B cell (primary cell): ENCODE measurements at regions of chr9 and their contacts with region 1.

Region 1: GRCh38 chr9:99140685-99141314 is 35.9 kb downstream of the TGFBR1 start:
- DNase-seq: peak; percentile 75
- ATAC-seq: peak; percentile 88
- H3K4me3 ChIP-seq: no peak overlapping the region
- H3K4me3 Mint-ChIP-seq: no peak overlapping the region
- H3K27ac ChIP-seq: no peak overlapping the region
- H3K27ac Mint-ChIP-seq: peak overlapping the region; percentile 46
- H3K4me1 ChIP-seq: peaks cover 15 to 16% of the 10 kb centered on the region in 2 donors
- H3K4me1 Mint-ChIP-seq: peaks cover 27% of the 10 kb centered on the region
- H3K27me3 ChIP-seq: no peaks in the 10 kb centered on the region
- H3K27me3 Mint-ChIP-seq: no peaks in the 10 kb centered on the region
- CTCF ChIP-seq: peak; percentile 99

Region 2: GRCh38 chr9:98848450-98849149 is 292.2 kb before region 1 on chr9:
- CTCF ChIA-PET with region 1: interaction called, 77 read pairs
- POLR2A ChIA-PET with region 1: no interaction called
- intact Hi-C with region 1: no loop called
- DNase-seq: peak; percentile 74
- ATAC-seq: peak; percentile 91
- H3K4me3 ChIP-seq: no peak overlapping the region
- H3K4me3 Mint-ChIP-seq: no peak overlapping the region
- H3K27ac ChIP-seq: no peak overlapping the region
- H3K27ac Mint-ChIP-seq: no peak overlapping the region
- H3K4me1 ChIP-seq: no peaks in the 10 kb centered on the region
- H3K4me1 Mint-ChIP-seq: no peaks in the 10 kb centered on the region
- H3K27me3 ChIP-seq: no peaks in the 10 kb centered on the region
- H3K27me3 Mint-ChIP-seq: no peaks in the 10 kb centered on the region
- CTCF ChIP-seq: peak; percentile 97

Region 3: GRCh38 chr9:98989036-98990000 is 151.5 kb before region 1 on chr9:
- CTCF ChIA-PET with region 1: interaction called, 439 read pairs
- POLR2A ChIA-PET with region 1: no interaction called
- intact Hi-C with region 1: no loop called
- DNase-seq: no peak
- ATAC-seq: no peak
- H3K4me3 ChIP-seq: no peak overlapping the region
- H3K4me3 Mint-ChIP-seq: no peak overlapping the region
- H3K27ac ChIP-seq: no peak overlapping the region
- H3K27ac Mint-ChIP-seq: no peak overlapping the region
- H3K4me1 ChIP-seq: peaks cover 14 to 17% of the 10 kb centered on the region in 2 donors
- H3K4me1 Mint-ChIP-seq: peaks cover 17% of the 10 kb centered on the region
- H3K27me3 ChIP-seq: no peaks in the 10 kb centered on the region
- H3K27me3 Mint-ChIP-seq: no peaks in the 10 kb centered on the region
- CTCF ChIP-seq: no peak

Region 4: DNA sequence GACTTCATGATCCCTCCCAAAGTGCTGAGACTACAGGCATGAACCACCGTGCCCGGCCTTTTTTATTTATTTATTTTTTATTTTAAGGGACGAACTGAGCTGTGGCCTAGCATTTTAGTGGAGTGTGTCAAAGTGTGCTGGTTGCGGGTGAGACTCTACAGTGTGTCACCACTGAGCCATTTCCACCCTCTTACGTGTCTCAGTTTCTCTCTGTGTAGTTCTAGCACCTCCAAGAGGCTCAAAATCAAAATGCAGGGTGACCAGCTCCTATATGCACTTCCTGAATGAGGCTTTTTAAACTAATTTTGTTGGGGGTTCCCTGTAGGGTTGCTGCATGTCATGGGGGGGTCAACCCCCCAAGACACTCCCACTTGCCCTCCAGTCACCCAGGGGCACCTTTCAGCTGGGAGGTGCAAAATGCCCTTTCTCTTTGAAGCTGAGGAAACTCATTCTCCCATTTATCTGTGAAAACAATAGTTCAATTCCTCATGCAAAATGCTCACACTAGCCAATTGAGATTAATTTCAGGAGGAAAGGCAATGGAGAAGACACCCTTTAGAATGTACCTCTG is 127.8 kb before region 1 on chr9:
- CTCF ChIA-PET with region 1: interaction called, 18 read pairs
- POLR2A ChIA-PET with region 1: no interaction called
- intact Hi-C with region 1: no loop called
- DNase-seq: no peak
- ATAC-seq: no peak
- H3K4me3 ChIP-seq: no peak overlapping the region
- H3K4me3 Mint-ChIP-seq: no peak overlapping the region
- H3K27ac ChIP-seq: no peak overlapping the region
- H3K27ac Mint-ChIP-seq: no peak overlapping the region
- H3K4me1 ChIP-seq: peaks cover 11 to 13% of the 10 kb centered on the region in 2 donors
- H3K4me1 Mint-ChIP-seq: peaks cover 11% of the 10 kb centered on the region
- H3K27me3 ChIP-seq: no peaks in the 10 kb centered on the region
- H3K27me3 Mint-ChIP-seq: no peaks in the 10 kb centered on the region
- CTCF ChIP-seq: no peak

Region 5: GRCh38 chr9:99104459-99105151 is 36.2 kb before region 1 on chr9 and contains the start of gene TGFBR1:
- CTCF ChIA-PET with region 1: interaction called, 82 read pairs
- POLR2A ChIA-PET with region 1: interaction called, 6 read pairs
- intact Hi-C with region 1: loop called (anchors 1 kb)
- DNase-seq: peak; percentile 96
- ATAC-seq: peak; percentile 83
- H3K4me3 ChIP-seq: peak within 1 kb of the TSS; percentile 64 to 87 (median 79)
- H3K4me3 Mint-ChIP-seq: peak within 1 kb of the TSS; percentile 97
- H3K27ac ChIP-seq: peak within 1 kb of the TSS; percentile 16 to 74
- H3K27ac Mint-ChIP-seq: peak within 1 kb of the TSS; percentile 89
- H3K4me1 ChIP-seq: peaks cover 40 to 44% of the 10 kb centered on the region in 2 donors
- H3K4me1 Mint-ChIP-seq: peaks cover 48% of the 10 kb centered on the region
- H3K27me3 ChIP-seq: no peaks in the 10 kb centered on the region
- H3K27me3 Mint-ChIP-seq: no peaks in the 10 kb centered on the region
- CTCF ChIP-seq: no peak
- total RNA-seq, gene TGFBR1: 60.7 TPM in 2 replicates

Region 6: DNA sequence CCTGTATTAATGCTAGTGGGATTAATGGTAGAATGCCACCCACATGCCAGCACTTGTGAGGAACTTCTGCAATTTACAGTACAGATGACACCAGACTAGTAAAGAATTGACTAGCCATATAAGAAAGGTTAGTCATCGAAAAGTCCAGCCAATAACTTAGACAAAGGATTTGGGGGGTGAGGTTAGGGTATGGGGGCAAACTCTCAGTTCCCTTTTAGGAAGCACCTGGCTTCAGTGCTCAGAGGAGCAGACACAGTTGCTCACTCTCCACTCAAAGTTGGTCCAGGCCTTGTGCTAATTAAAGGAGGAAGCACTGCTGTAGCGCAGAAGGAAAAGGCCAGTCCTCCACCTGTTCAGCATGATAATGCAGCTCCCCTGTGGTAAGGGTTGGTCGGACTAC is 10.7 kb before region 1 on chr9:
- CTCF ChIA-PET with region 1: interaction called, 11 read pairs
- POLR2A ChIA-PET with region 1: no interaction called
- intact Hi-C with region 1: no loop called
- DNase-seq: peak; percentile 82
- ATAC-seq: peak; percentile 96
- H3K4me3 ChIP-seq: no peak overlapping the region
- H3K4me3 Mint-ChIP-seq: peak overlapping the region; percentile 15
- H3K27ac ChIP-seq: peak overlapping the region in 1 of 2 donors; percentile 28
- H3K27ac Mint-ChIP-seq: peak overlapping the region; percentile 71
- H3K4me1 ChIP-seq: peaks cover 24 to 27% of the 10 kb centered on the region in 2 donors
- H3K4me1 Mint-ChIP-seq: peaks cover 64% of the 10 kb centered on the region
- H3K27me3 ChIP-seq: no peaks in the 10 kb centered on the region
- H3K27me3 Mint-ChIP-seq: no peaks in the 10 kb centered on the region
- CTCF ChIP-seq: no peak